Heart right ventricle (tissue), 16 donors: ENCODE measurements at regions of chrX and their contacts with region 1.

Region 1: GRCh38 chrX:123184219-123184857 is at the start of gene GRIA3:
- DNase-seq: no peak
- ATAC-seq: peak in 5 of 8 donors; percentile 9 to 56 (median 40)
- H3K4me3 ChIP-seq: peak within 1 kb of the TSS in 9 of 10 donors; percentile 24 to 52 (median 46)
- H3K27ac ChIP-seq: no peak within 1 kb of the TSS
- H3K4me1 ChIP-seq: no peaks in the 10 kb centered on the region
- H3K27me3 ChIP-seq: peaks cover 0 to 37% (median 0%) of the 10 kb centered on the region in 7 donors
- CTCF ChIP-seq: no peak
- total RNA-seq, gene GRIA3: 0.45 to 12.4 (median 1.3) TPM

Region 2: DNA sequence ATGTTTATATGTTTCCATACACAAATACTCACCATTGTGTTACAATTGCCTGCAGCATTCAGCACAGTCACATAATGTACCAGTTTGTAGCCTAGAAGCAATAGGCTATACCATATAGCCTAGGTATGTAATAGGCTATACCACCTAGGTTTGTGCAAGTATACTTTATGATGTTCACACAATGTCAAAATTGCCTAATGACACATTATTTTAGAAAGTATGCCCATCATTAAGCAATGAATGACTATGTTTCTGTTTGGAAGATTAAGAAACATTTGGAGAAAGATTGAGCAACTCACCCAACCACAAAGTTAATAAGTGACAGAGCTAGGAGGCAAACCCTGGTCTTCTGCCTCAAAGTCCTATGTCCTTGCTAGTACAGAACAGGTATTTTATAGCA is 97.0 kb before region 1 on chrX:
- intact Hi-C with region 1: no loop called
- DNase-seq: no peak
- ATAC-seq: no peak
- H3K4me3 ChIP-seq: no peak overlapping the region
- H3K27ac ChIP-seq: no peak overlapping the region
- H3K4me1 ChIP-seq: no peaks in the 10 kb centered on the region
- H3K27me3 ChIP-seq: no peaks in the 10 kb centered on the region
- CTCF ChIP-seq: no peak

Region 3: DNA sequence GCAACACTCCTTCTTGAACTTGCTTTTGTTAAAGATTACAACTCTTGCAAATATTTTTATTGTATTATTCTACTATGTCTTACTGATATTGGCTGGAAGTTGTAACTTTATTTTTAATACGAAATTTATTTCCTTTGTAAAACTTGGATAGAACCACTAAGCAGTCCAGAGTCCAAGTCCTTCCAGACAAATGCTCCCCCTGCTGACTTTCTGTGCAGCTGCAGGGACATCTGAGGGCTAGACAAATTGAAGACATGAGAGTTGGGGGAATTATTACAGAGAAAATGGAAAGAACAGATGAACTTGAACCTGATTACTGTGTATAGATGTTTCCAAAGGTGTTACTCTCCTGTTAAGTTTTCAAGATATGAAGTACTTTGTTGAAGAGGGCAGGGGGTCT is 238.5 kb after region 1 on chrX:
- intact Hi-C with region 1: loop called in 2 of 10 experiments (anchors 10 kb)
- DNase-seq: peak in 1 of 2 donors; percentile 4
- ATAC-seq: no peak
- H3K4me3 ChIP-seq: no peak overlapping the region
- H3K27ac ChIP-seq: no peak overlapping the region
- H3K4me1 ChIP-seq: no peaks in the 10 kb centered on the region
- H3K27me3 ChIP-seq: no peaks in the 10 kb centered on the region
- CTCF ChIP-seq: peak; percentile 9 to 65 (median 55)

Region 4: GRCh38 chrX:124239911-124240310 is 1055.6 kb after region 1 on chrX:
- intact Hi-C with region 1: no loop called
- DNase-seq: no peak
- ATAC-seq: no peak
- H3K4me3 ChIP-seq: no peak overlapping the region
- H3K27ac ChIP-seq: no peak overlapping the region
- H3K4me1 ChIP-seq: no peaks in the 10 kb centered on the region
- H3K27me3 ChIP-seq: no peaks in the 10 kb centered on the region
- CTCF ChIP-seq: no peak